SK-N-SH (cell line): ENCODE measurements at regions of chr9 and their contacts with region 1.

Region 1: GRCh38 chr9:133992780-133993634 is 883 bp upstream of the VAV2 start:
- DNase-seq: peak; percentile 94
- H3K4me3 ChIP-seq: peak overlapping the region; percentile 75 to 87
- H3K27ac ChIP-seq: peak overlapping the region; percentile 82 to 93
- H3K4me1 ChIP-seq: peaks cover 6 to 34% of the 10 kb centered on the region in 2 experiments; a peak in 3 of 4 replicates
- H3K27me3 ChIP-seq: no peaks in the 10 kb centered on the region
- CTCF ChIP-seq: peak; percentile 63
- EP300 ChIP-seq: no peak
- RAD21 ChIP-seq: peak; percentile 50

Region 2: DNA sequence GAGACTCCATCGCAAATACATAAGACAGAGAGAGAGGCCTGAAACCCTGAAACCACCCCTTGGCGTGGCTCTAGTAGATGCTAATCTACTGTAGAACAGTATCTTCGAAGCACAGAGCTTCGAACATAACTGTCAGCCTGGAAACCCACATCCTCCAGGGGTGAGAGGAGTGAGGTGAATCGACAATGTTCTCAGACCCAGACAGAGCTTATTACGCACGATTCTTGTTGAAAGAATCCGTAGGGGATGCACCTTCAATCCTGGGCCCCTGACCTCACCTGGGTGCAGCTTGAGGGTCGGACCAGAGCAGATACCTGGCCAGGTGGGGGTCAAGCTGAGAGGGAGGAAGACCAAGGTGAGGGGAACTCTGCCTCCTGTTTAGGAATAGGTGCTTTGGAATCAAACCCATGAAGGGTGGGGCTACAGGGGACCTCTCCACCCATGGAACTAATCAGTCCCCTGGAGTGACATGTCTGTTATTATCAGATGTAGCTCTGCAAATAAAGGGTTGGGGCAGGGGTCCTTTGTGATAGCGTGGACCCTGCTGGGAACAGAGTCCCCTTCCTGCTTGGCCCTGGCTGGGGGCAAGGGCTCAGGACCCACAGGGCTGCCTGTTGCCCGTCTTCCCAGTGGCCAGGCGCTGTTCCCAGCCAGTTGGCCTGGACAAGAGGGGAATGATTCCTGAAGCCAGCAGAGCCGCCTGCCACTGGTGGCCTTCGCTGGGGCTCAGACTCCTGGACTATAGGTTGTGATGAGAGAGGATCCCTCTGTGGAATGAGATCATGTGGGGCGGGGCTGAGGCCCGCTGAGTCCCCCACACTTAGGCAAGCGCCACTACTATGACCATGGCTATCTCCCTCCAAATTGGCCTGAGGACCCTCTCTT is 315.6 kb before region 1 on chr9:
- CTCF ChIA-PET with region 1: no interaction called
- POLR2A ChIA-PET with region 1: no interaction called
- DNase-seq: no peak
- H3K4me3 ChIP-seq: no peak overlapping the region
- H3K27ac ChIP-seq: no peak overlapping the region
- H3K4me1 ChIP-seq: peaks cover 0 to 38% of the 10 kb centered on the region in 2 experiments; a peak in 1 of 4 replicates
- H3K27me3 ChIP-seq: no peaks in the 10 kb centered on the region
- CTCF ChIP-seq: no peak
- EP300 ChIP-seq: no peak
- RAD21 ChIP-seq: no peak

Region 3: GRCh38 chr9:133742849-133743444 is 250.1 kb before region 1 on chr9:
- CTCF ChIA-PET with region 1: interaction called, 35 read pairs
- POLR2A ChIA-PET with region 1: interaction called, 8 read pairs
- DNase-seq: peak; percentile 95
- H3K4me3 ChIP-seq: no peak overlapping the region; a peak in 1 of 4 replicates
- H3K27ac ChIP-seq: no peak overlapping the region
- H3K4me1 ChIP-seq: peaks cover 3 to 21% of the 10 kb centered on the region in 2 experiments; a peak in 1 of 4 replicates
- H3K27me3 ChIP-seq: no peaks in the 10 kb centered on the region
- CTCF ChIP-seq: peak; percentile 92
- EP300 ChIP-seq: no peak
- RAD21 ChIP-seq: peak; percentile 75

Region 4: GRCh38 chr9:133792721-133793470 is 200.1 kb before region 1 on chr9:
- CTCF ChIA-PET with region 1: interaction called, 236 read pairs
- POLR2A ChIA-PET with region 1: no interaction called
- DNase-seq: peak; percentile 92
- H3K4me3 ChIP-seq: no peak overlapping the region
- H3K27ac ChIP-seq: no peak overlapping the region; a peak in 1 of 4 replicates
- H3K4me1 ChIP-seq: peaks cover 0 to 10% of the 10 kb centered on the region in 2 experiments; a peak in 2 of 4 replicates
- H3K27me3 ChIP-seq: no peaks in the 10 kb centered on the region
- CTCF ChIP-seq: peak; percentile 85
- EP300 ChIP-seq: no peak
- RAD21 ChIP-seq: peak; percentile 95

Region 5: GRCh38 chr9:133821601-133822429 is 171.2 kb before region 1 on chr9:
- CTCF ChIA-PET with region 1: interaction called, 53 read pairs
- POLR2A ChIA-PET with region 1: no interaction called
- DNase-seq: no peak
- H3K4me3 ChIP-seq: no peak overlapping the region
- H3K27ac ChIP-seq: no peak overlapping the region; a peak in 1 of 4 replicates
- H3K4me1 ChIP-seq: peaks cover 0 to 19% of the 10 kb centered on the region in 2 experiments; a peak in 2 of 4 replicates
- H3K27me3 ChIP-seq: no peaks in the 10 kb centered on the region
- CTCF ChIP-seq: no peak
- EP300 ChIP-seq: no peak
- RAD21 ChIP-seq: no peak

Region 6: GRCh38 chr9:133869674-133870405 is 123.2 kb before region 1 on chr9:
- CTCF ChIA-PET with region 1: interaction called, 42 read pairs
- POLR2A ChIA-PET with region 1: interaction called, 5 read pairs
- DNase-seq: peak; percentile 92
- H3K4me3 ChIP-seq: no peak overlapping the region
- H3K27ac ChIP-seq: peak overlapping the region; percentile 45 to 98; a peak in 3 of 4 replicates
- H3K4me1 ChIP-seq: peaks cover 26 to 75% of the 10 kb centered on the region in 2 experiments
- H3K27me3 ChIP-seq: no peaks in the 10 kb centered on the region
- CTCF ChIP-seq: no peak; the same call in 1 of the 2 replicates
- EP300 ChIP-seq: peak in 1 of 2 experiments; percentile 95; a peak in 2 of 4 replicates
- RAD21 ChIP-seq: peak; percentile 36

Region 7: DNA sequence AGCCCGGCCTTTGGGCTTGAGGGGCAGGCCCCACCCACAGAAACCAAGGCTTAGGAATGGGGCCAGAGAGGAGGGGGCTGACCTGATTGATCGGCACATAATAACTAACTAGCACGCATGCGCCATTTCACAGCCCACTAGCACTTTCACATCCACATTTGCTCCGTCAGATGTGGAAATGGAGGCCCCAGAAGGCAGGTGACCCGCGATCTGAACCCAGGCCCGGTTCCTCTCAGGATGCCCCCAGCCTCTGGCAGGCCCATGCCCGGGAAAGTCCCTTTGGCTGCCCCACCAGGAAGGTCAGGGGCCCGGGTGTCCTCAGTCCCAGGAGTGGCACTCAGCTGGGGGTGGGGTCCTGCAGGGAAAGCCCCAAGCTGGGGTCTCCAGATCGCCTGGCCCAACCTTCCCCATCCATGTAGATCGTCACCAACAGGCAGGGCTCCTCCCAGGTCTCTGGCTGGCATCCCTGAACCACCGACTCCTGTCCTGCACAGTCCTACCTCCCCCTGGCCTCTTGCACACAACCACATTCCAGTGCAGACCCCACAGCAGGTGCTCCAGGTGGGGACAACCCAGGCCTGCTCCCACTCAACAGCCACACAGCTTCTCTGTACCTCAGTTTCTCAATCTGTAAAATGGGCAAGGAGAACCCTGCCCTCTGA is 47.6 kb before region 1 on chr9:
- CTCF ChIA-PET with region 1: interaction called, 39 read pairs
- POLR2A ChIA-PET with region 1: interaction called, 5 read pairs
- DNase-seq: no peak
- H3K4me3 ChIP-seq: no peak overlapping the region
- H3K27ac ChIP-seq: peak overlapping the region; percentile 75 to 97
- H3K4me1 ChIP-seq: peaks cover 13 to 70% of the 10 kb centered on the region in 2 experiments
- H3K27me3 ChIP-seq: no peaks in the 10 kb centered on the region
- CTCF ChIP-seq: no peak
- EP300 ChIP-seq: no peak
- RAD21 ChIP-seq: no peak

Region 8: DNA sequence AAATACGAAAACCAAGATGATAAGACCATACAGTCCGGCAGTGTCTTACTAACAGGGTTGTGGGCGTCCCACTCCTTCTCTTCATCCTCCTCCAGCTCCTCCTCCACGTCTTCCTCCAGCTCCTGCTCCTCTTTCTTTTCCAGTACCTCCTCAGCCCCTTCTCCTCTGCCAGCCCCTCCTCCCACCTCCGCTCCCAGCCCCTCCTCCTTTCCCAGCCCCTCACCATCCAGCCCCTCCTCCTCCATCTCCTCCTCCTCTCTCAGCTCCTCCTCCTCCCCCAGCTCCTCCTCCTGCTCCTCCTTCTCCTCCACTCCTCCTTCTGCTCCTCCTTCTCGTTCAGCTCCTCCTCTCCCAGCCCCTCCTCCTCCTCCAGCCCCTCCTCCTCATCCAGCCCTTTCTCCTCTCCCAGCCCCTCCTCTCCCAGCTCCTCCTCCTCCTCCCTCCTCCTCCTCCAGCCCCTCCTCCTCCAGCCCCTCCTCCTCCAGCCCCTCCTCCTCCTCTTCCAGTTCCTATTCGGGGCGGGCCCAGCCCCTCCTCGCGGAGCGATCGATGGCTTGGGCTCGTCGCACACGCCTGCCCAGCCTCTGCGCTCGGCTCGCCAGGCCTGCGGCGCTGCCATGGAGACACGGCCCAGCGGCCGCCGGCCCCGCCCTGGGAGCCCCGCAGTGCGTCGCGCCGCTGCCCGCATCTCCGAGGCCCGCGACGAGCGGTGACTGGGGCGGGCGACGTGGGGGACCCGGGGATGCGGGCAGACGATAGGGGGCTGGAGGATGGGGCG is 32.0 kb after region 1 on chr9 and contains the start of gene BRD3OS:
- CTCF ChIA-PET with region 1: interaction called, 23 read pairs
- POLR2A ChIA-PET with region 1: interaction called, 3 read pairs
- DNase-seq: peak; percentile 95
- H3K4me3 ChIP-seq: peak within 1 kb of the TSS; percentile 74 to 80
- H3K27ac ChIP-seq: peak within 1 kb of the TSS; percentile 58 to 74
- H3K4me1 ChIP-seq: peaks cover 0 to 12% of the 10 kb centered on the region in 2 experiments; a peak in 1 of 4 replicates
- H3K27me3 ChIP-seq: no peaks in the 10 kb centered on the region
- CTCF ChIP-seq: no peak
- EP300 ChIP-seq: no peak
- RAD21 ChIP-seq: no peak
- polyA plus RNA-seq, gene BRD3OS: 21.6 and 23.1 TPM in 2 replicates

Region 9: DNA sequence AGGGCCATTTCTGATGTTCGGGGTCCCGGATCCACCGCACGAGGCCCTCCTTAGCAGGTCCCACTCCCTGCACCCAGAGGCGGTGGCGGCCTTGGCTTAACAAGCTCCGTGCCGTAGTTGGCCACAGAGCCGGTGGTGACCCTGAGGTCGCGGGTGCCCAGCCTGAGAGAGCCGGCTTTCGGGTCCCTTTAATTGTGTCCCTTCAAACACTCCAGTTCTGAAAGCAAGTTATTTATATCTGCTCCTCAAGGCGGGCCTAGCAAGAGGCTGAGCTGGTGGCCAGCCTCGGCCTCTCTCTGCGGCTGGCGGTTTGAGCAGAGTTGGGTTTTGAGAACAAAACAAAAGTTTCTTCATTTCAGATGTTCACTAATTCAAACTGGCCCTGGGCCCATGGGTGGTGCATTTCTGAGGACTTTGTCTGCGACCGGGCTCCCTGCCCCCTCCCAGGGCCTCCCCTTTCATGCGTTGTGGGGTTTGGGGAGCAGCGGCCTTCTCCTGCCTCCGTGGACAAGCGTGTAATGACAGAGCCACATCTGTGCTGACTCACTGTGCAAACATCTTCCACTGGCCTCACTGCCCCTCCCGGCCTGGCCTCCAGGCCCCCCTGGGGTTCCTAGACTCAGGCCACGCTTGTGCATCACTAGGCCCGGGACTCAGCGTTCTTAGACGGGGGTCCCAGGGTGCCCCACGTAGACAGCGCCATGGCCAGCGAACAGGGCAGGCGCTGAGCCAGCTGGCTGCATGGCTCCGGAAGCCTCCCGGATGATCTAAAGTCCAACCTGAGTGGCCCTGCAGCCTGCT is 599.2 kb after region 1 on chr9:
- CTCF ChIA-PET with region 1: no interaction called
- POLR2A ChIA-PET with region 1: no interaction called
- DNase-seq: no peak
- H3K4me3 ChIP-seq: no peak overlapping the region
- H3K27ac ChIP-seq: no peak overlapping the region
- H3K4me1 ChIP-seq: peaks cover 8 to 9% of the 10 kb centered on the region in 2 experiments; a peak in 1 of 4 replicates
- H3K27me3 ChIP-seq: no peaks in the 10 kb centered on the region
- CTCF ChIP-seq: no peak
- EP300 ChIP-seq: no peak
- RAD21 ChIP-seq: no peak